ENCODE measurements at regions of chr9 and their contacts with region 1.

Region 1: DNA sequence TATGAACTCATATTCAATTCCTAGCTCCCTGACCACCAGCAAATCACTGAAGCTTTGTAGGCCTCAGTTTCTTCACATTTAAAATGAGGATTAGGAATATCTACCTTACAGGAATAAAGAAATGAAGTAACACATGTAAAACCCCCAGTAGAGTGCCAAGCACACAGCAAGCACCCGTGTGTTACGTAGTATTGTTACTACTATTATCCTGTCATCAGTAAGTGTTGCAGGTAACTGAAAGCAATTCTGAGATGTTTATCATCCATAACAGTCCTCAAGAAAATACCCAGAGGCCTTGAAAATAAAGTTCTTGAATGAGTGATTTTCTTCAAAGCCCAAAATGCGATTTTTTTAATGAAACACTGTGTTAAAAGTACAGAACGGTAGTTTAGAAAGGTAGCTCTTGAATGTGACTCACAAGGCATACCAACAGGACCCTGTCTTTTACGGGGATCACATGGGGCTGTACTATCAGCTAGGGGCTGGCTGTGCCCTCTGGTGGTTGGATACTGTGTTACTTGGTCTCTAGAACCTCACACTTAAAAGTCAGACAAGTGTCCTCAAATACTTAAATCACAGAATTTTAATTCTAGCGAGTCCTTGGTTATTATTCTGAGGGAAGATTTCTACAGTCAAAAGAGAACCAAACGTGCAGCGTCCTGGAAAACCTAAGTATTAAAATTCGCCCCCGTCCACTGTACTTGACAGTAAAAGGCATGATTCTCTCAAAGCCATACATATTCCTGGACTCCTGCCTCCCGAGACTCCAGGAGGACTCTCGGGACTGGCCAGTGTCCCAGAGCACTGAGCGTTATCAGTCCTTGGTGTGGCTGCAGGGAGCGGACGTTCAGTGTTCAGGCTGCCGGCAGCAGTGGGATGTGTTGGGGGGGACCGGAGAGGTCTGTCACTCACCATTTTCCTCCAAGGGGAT is 725 bp downstream of the NDUFB6 start:
- DNase-seq: peak; percentile 52 to 72
- H3K4me3 ChIP-seq: peak overlapping the region; percentile 89
- H3K27ac ChIP-seq: peak overlapping the region; percentile 56
- H3K4me1 ChIP-seq: peaks cover 18% of the 10 kb centered on the region
- H3K27me3 ChIP-seq: no peaks in the 10 kb centered on the region
- CTCF ChIP-seq: peak; percentile 77

Region 2: GRCh38 chr9:32378993-32379729 is 193.1 kb before region 1 on chr9:
- CTCF ChIA-PET with region 1: interaction called, 19 read pairs
- POLR2A ChIA-PET with region 1: no interaction called
- intact Hi-C with region 1: loop called (anchors 1 kb)
- DNase-seq: peak; percentile 35 to 41
- H3K4me3 ChIP-seq: no peak overlapping the region
- H3K27ac ChIP-seq: no peak overlapping the region
- H3K4me1 ChIP-seq: no peaks in the 10 kb centered on the region
- H3K27me3 ChIP-seq: no peaks in the 10 kb centered on the region
- CTCF ChIP-seq: peak; percentile 74

Region 3: GRCh38 chr9:32384364-32385151 is 187.7 kb before region 1 on chr9 and contains the start of gene ACO1:
- CTCF ChIA-PET with region 1: interaction called, 19 read pairs
- POLR2A ChIA-PET with region 1: no interaction called
- intact Hi-C with region 1: loop called (anchors 1 kb)
- DNase-seq: peak; percentile 62 to 87
- H3K4me3 ChIP-seq: peak within 1 kb of the TSS; percentile 84
- H3K27ac ChIP-seq: no peak within 1 kb of the TSS
- H3K4me1 ChIP-seq: no peaks in the 10 kb centered on the region
- H3K27me3 ChIP-seq: no peaks in the 10 kb centered on the region
- CTCF ChIP-seq: no peak
- total RNA-seq, gene ACO1: 26.1 and 30.2 TPM in 2 replicates

Region 4: DNA sequence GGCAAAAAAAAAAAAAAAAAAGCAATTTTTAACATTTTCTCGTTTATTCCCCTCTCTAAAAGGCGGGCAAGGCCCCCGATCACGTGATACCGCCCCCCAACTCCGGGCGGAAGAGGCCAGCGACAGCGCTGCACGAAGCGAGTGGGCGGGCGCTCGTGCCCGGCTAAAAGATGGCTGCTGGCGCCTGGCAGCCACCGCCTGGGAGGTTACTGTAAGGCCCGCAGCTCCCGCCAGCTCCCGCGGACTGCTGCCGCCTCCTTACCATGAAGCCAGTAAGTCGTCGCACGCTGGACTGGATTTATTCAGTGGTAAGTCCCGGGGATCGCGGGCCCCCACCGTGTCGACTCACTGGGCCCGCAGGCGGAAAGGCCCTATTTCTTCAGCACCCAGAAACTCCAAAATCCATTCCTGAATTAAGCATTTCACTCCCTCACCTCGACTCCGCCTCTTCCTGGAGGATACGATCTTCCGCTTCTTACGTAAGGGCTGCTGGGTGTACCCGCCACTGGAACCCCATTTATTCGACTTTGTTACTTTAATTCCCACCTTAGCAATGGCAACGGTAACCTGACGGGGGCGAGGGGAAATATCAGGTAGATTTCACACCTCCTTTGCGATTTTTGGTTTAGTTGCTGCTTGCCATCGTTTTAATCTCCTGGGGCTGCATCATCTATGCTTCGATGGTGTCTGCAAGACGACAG is 19.9 kb before region 1 on chr9 and contains the starts of genes SMIM27 and TOPORS:
- CTCF ChIA-PET with region 1: interaction called, 6 read pairs
- POLR2A ChIA-PET with region 1: no interaction called
- intact Hi-C with region 1: loop called (anchors 2 kb)
- DNase-seq: peak; percentile 74 to 76
- H3K4me3 ChIP-seq: peak within 1 kb of the TSS; percentile 95
- H3K27ac ChIP-seq: peak within 1 kb of the TSS; percentile 77
- H3K4me1 ChIP-seq: peaks cover 15% of the 10 kb centered on the region
- H3K27me3 ChIP-seq: no peaks in the 10 kb centered on the region
- CTCF ChIP-seq: no peak
- total RNA-seq, gene SMIM27: 8.0 and 8.2 TPM in 2 replicates
- total RNA-seq, gene TOPORS: 8.0 and 11.1 TPM in 2 replicates